Naive thymus-derived CD4-positive, alpha-beta T cell (primary cell): ENCODE measurements at regions of chr2 and their contacts with region 1.

Region 1: DNA sequence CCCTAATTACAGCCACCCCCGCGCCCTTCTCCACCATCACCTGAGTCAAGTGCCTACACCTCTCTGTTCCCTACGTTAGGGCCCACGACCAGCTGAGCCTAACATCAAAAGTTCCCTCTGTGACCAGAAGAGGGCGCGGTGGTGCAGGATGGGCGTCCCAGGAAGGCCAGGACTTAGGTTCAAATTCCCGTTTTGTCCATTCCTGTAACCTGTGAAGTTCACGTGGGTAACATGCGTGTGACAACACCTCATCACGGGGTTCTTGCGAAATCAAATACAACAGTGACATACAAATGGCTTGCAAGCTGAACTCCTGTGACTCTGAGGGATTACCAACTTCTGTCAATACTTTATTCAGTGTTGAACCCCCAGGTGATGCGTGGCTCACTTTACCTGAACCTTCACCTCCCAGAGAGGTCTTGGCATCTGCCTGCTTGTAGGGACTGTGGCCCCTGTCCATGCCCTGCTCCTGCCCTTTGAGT is 207.9 kb downstream of the ARL4C start:
- DNase-seq: peak; percentile 61 to 81 (median 70)
- ATAC-seq: peak; percentile 30
- H3K4me3 ChIP-seq: no peak overlapping the region
- H3K4me3 Mint-ChIP-seq: peak overlapping the region; percentile 10 to 87 (median 70)
- H3K27ac ChIP-seq: peak overlapping the region; percentile 94
- H3K27ac Mint-ChIP-seq: peak overlapping the region; percentile 92 to 100 (median 99)
- H3K4me1 ChIP-seq: peaks cover 56 to 63% of the 10 kb centered on the region in 2 donors
- H3K4me1 Mint-ChIP-seq: peaks cover 47 to 80% (median 68%) of the 10 kb centered on the region in 7 donors
- H3K27me3 ChIP-seq: no peaks in the 10 kb centered on the region
- H3K27me3 Mint-ChIP-seq: no peaks in the 10 kb centered on the region

Region 2: DNA sequence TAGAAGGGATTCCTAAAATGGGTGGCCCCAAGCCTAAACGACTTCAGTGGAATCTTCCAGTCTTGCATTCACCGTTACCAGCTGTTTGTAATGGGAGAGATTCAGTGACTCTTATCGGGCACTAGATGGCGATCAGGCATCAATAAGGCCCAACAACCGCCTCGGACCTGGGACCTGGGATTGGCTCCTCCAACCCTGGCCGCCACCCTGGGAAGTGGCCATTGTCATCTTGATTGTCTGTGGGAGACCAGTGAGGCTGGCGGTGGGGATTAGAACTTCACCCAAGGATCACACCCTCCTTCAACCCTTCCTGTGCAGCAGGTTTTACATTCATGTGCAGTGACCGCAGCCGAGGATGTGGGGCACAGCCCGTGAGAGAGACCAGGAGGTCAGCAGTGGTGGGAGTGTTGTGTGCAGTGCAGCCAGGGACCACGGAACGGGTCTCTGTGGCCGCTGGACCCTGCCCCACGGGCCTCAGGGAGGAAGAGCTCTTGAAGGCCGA is 153.2 kb before region 1 on chr2:
- CTCF ChIA-PET with region 1: interaction called, 10 read pairs
- POLR2A ChIA-PET with region 1: interaction called, 13 read pairs
- intact Hi-C with region 1: loop called (anchors 1 kb)
- DNase-seq: peak; percentile 13 to 52 (median 40)
- ATAC-seq: peak; percentile 73
- H3K4me3 ChIP-seq: peak overlapping the region; percentile 2
- H3K4me3 Mint-ChIP-seq: peak overlapping the region in 2 of 10 donors; percentile 9 to 30
- H3K27ac ChIP-seq: no peak overlapping the region
- H3K27ac Mint-ChIP-seq: peak overlapping the region; percentile 31 to 83 (median 56)
- H3K4me1 ChIP-seq: peaks cover 23 to 24% of the 10 kb centered on the region in 2 donors
- H3K4me1 Mint-ChIP-seq: peaks cover 6 to 31% (median 29%) of the 10 kb centered on the region in 7 donors
- H3K27me3 ChIP-seq: no peaks in the 10 kb centered on the region
- H3K27me3 Mint-ChIP-seq: peaks cover 0 to 17% (median 0%) of the 10 kb centered on the region in 5 donors

Region 3: GRCh38 chr2:234308813-234309195 is 19.8 kb after region 1 on chr2:
- CTCF ChIA-PET with region 1: no interaction called
- POLR2A ChIA-PET with region 1: interaction called, 9 read pairs
- intact Hi-C with region 1: loop called (anchors 1 kb)
- DNase-seq: peak; percentile 28 to 87 (median 82)
- ATAC-seq: peak; percentile 94
- H3K4me3 ChIP-seq: no peak overlapping the region
- H3K4me3 Mint-ChIP-seq: peak overlapping the region; percentile 21 to 84 (median 70)
- H3K27ac ChIP-seq: peak overlapping the region; percentile 65
- H3K27ac Mint-ChIP-seq: peak overlapping the region; percentile 77 to 98 (median 93)
- H3K4me1 ChIP-seq: peaks cover 6 to 21% of the 10 kb centered on the region in 2 donors
- H3K4me1 Mint-ChIP-seq: peaks cover 20 to 71% (median 41%) of the 10 kb centered on the region in 7 donors
- H3K27me3 ChIP-seq: no peaks in the 10 kb centered on the region
- H3K27me3 Mint-ChIP-seq: no peaks in the 10 kb centered on the region

Region 4: DNA sequence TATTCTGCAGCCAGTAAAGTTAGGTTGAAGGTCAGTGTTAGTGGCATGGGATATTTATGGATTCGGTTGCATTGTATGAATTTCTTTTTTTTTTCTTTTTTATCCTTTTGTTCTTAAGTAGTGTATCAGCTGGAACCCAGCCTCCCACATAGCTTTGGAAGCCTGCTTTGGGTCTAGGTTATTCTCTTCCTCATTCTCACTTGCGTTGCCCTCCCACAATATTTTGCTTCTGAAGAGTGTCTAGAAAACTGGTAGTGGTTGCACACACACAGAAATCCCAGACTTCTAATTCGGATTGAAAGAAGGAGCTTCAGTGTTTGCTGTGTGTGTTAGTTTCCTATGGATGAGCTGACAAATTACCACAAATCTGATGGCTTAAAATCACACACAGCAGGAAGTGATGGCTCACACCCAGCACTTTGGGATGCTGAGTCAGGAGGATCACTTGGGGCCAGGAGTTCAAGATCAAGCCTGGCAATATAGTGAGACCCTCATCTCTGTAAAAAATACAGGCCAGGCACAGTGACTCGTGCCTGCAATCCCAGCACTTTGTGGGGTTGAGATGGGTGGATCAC is 103.1 kb after region 1 on chr2:
- CTCF ChIA-PET with region 1: interaction called, 4 read pairs
- POLR2A ChIA-PET with region 1: interaction called, 8 read pairs
- intact Hi-C with region 1: loop called in 1 of 2 experiments (anchors 1 kb)
- DNase-seq: no peak
- ATAC-seq: no peak
- H3K4me3 ChIP-seq: no peak overlapping the region
- H3K4me3 Mint-ChIP-seq: peak overlapping the region in 9 of 10 donors; percentile 35 to 84 (median 46)
- H3K27ac ChIP-seq: peak overlapping the region; percentile 53
- H3K27ac Mint-ChIP-seq: peak overlapping the region; percentile 17 to 98 (median 94)
- H3K4me1 ChIP-seq: peaks cover 21 to 53% of the 10 kb centered on the region in 2 donors
- H3K4me1 Mint-ChIP-seq: peaks cover 34 to 73% (median 65%) of the 10 kb centered on the region in 7 donors
- H3K27me3 ChIP-seq: no peaks in the 10 kb centered on the region
- H3K27me3 Mint-ChIP-seq: no peaks in the 10 kb centered on the region

Region 5: DNA sequence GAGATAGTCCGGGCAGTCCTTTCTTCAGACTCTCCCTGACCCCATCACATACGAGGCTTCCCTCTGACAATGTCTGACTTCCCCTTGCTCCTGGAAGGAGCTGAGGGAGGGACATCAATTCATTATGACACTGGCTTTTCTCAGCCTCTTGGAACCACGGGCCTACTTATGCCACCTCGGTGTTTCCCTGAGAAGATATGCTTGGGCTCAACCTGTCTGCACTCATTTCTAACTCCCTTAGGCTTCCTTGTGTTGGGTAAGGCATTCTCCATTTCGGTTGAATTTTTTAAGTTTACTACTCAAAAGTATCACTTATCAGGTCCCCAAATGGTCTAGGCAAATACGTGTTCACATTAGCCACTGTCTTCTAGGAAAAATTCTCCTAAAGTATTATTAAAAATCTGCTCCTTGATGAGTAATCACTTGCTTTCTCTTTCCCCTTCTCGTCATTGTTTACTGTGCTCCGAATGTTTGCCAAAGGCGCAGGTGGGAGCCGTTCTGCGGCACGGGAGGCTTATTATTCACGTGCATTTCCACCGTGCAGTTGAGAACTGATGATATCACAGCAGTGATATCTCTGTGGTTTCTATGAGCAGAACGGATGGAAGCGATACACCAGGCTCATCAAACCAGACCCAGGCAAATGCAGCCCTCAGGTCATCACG is 174.7 kb after region 1 on chr2:
- CTCF ChIA-PET with region 1: interaction called, 3 read pairs
- POLR2A ChIA-PET with region 1: interaction called, 270 read pairs
- intact Hi-C with region 1: loop called (anchors 1 kb)
- DNase-seq: peak; percentile 36 to 91 (median 87)
- ATAC-seq: peak; percentile 93
- H3K4me3 ChIP-seq: peak overlapping the region; percentile 26
- H3K4me3 Mint-ChIP-seq: peak overlapping the region; percentile 45 to 84 (median 76)
- H3K27ac ChIP-seq: peak overlapping the region; percentile 93
- H3K27ac Mint-ChIP-seq: peak overlapping the region; percentile 94 to 100 (median 96)
- H3K4me1 ChIP-seq: peaks cover 60 to 63% of the 10 kb centered on the region in 2 donors
- H3K4me1 Mint-ChIP-seq: peaks cover 49 to 97% (median 79%) of the 10 kb centered on the region in 7 donors
- H3K27me3 ChIP-seq: no peaks in the 10 kb centered on the region
- H3K27me3 Mint-ChIP-seq: no peaks in the 10 kb centered on the region

Region 6: GRCh38 chr2:234500394-234501006 is 211.5 kb after region 1 on chr2:
- CTCF ChIA-PET with region 1: interaction called, 32 read pairs
- POLR2A ChIA-PET with region 1: interaction called, 150 read pairs
- intact Hi-C with region 1: loop called (anchors 1 kb)
- DNase-seq: peak; percentile 39 to 83 (median 77)
- ATAC-seq: peak; percentile 68
- H3K4me3 ChIP-seq: peak overlapping the region; percentile 32
- H3K4me3 Mint-ChIP-seq: peak overlapping the region; percentile 44 to 91 (median 73)
- H3K27ac ChIP-seq: peak overlapping the region; percentile 91
- H3K27ac Mint-ChIP-seq: peak overlapping the region; percentile 56 to 98 (median 92)
- H3K4me1 ChIP-seq: peaks cover 24 to 30% of the 10 kb centered on the region in 2 donors
- H3K4me1 Mint-ChIP-seq: peaks cover 17 to 34% (median 31%) of the 10 kb centered on the region in 7 donors
- H3K27me3 ChIP-seq: no peaks in the 10 kb centered on the region
- H3K27me3 Mint-ChIP-seq: peaks cover 0 to 34% (median 0%) of the 10 kb centered on the region in 5 donors